BJ (cell line): ENCODE measurements at regions of chr22 and their contacts with region 1.

Region 1: GRCh38 chr22:33038131-33038772 is 19.9 kb downstream of the SYN3 start:
- DNase-seq: no peak
- H3K4me3 ChIP-seq: no peak overlapping the region
- H3K27me3 ChIP-seq: no peaks in the 10 kb centered on the region; the same call in none of the 2 replicates
- CTCF ChIP-seq: no peak

Region 2: GRCh38 chr22:33028234-33028633 is 10.0 kb before region 1 on chr22:
- CTCF ChIA-PET with region 1: no interaction called
- POLR2A ChIA-PET with region 1: no interaction called
- DNase-seq: no peak
- H3K4me3 ChIP-seq: no peak overlapping the region
- H3K27me3 ChIP-seq: peaks cover 4% of the 10 kb centered on the region
- CTCF ChIP-seq: no peak

Region 3: DNA sequence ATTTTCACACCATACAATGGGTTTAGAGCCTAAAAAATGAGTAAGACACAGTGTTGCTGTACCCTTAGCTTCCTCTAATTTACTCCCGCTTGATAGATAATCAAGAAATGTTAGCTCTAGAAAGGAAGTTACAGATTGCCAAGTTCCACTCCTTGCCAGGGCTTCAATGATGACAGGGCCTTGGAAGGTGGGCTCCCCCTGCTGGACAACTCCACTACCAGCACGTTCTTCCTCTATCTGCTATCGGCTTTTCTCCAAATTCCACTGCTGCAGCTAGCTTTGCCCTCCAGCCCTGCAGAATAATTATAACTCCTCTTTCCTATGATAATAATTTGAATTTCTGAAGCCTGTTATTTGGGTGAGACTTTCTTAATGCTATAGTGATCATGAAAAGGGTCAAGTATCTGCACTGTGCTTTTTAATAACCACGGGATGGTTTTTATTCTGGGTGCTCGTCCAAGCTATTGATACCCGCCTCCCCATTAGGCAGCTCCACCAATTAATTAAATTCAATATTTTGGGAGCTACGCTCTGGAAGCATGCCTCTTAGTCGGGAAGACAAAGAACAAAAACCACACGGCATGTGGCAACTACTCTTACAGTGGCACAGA is 11.0 kb after region 1 on chr22:
- CTCF ChIA-PET with region 1: interaction called, 44 read pairs
- POLR2A ChIA-PET with region 1: no interaction called
- DNase-seq: peak; percentile 4
- H3K4me3 ChIP-seq: no peak overlapping the region
- H3K27me3 ChIP-seq: peaks cover 2% of the 10 kb centered on the region; the same call in 1 of the 2 replicates
- CTCF ChIP-seq: peak; percentile 96